Thyroid gland (tissue), 4 donors: ENCODE measurements at regions of chr2 and their contacts with region 1.

Region 1: GRCh38 chr2:42835577-42836371 is 43.4 kb upstream of the HAAO start:
- DNase-seq: peak in 1 of 2 donors; percentile 27
- H3K4me3 ChIP-seq: no peak overlapping the region
- H3K27ac ChIP-seq: peak overlapping the region in 1 of 3 donors; percentile 40
- H3K4me1 ChIP-seq: no peaks in the 10 kb centered on the region
- H3K27me3 ChIP-seq: no peaks in the 10 kb centered on the region
- CTCF ChIP-seq: no peak
- POLR2A ChIP-seq: no peak

Region 2: DNA sequence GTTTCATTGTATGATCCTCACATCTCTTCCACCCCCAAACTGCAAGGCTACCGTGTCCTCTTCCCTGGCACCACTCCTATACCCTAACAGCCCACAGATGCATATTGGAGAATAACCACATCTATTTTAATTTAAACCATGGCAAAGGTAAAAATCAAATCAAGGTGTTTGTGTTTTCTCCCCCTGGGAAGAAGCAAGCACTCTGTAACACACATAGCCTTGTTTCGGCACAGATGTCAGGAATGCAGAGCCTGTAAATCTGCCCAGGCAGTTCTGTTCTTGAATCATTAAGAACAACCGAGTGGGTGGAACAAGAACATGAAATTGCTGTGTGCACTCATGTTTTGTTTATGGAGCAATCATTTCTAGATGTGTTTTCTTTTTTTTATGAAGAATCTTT is 467.9 kb before region 1 on chr2:
- intact Hi-C with region 1: no loop called
- DNase-seq: no peak
- H3K4me3 ChIP-seq: no peak overlapping the region
- H3K27ac ChIP-seq: no peak overlapping the region
- H3K4me1 ChIP-seq: no peaks in the 10 kb centered on the region
- H3K27me3 ChIP-seq: no peaks in the 10 kb centered on the region
- CTCF ChIP-seq: no peak
- POLR2A ChIP-seq: no peak

Region 3: DNA sequence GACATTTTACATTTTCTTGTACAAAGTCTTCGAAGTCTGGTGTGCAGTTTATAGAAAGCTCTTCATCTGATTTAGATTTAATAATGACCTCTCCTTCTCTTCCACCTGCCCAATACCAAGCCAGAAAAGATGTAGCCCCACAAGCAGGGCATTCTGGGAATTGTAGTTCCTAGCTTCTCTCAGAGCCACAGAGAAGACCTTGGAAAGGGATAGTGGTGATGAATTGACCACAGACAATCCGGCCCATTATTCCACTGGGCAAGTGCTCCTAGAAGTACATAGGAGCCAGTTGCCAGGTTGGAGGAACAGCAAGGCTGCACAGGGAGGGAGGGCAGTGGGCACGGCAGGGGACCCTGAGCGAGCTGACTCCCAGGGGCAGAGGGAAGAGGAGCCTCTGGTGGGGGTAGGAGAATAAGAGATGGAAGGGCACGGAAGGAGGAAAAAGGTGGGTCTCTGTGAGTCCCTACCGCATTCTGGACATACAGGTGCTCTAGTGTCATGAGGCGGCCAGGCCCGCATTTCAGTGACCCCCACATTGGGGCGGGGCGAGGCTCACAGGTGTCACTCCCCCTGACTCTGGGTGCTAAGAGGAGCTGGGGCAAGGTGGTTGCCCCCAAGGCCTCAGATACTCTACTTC is 109.1 kb after region 1 on chr2:
- intact Hi-C with region 1: loop called (anchors 5 kb)
- DNase-seq: no peak
- H3K4me3 ChIP-seq: no peak overlapping the region
- H3K27ac ChIP-seq: no peak overlapping the region
- H3K4me1 ChIP-seq: peaks cover 0 to 15% of the 10 kb centered on the region in 2 donors
- H3K27me3 ChIP-seq: no peaks in the 10 kb centered on the region
- CTCF ChIP-seq: no peak
- POLR2A ChIP-seq: no peak

Region 4: GRCh38 chr2:43123981-43124686 is 288.4 kb after region 1 on chr2:
- intact Hi-C with region 1: no loop called
- DNase-seq: no peak
- H3K4me3 ChIP-seq: no peak overlapping the region
- H3K27ac ChIP-seq: no peak overlapping the region
- H3K4me1 ChIP-seq: peaks cover 0 to 3% of the 10 kb centered on the region in 2 donors
- H3K27me3 ChIP-seq: no peaks in the 10 kb centered on the region
- CTCF ChIP-seq: no peak
- POLR2A ChIP-seq: no peak